Cardiac septum (tissue), 1 donor: ENCODE measurements at regions of chr4 and their contacts with region 1.

Region 1: GRCh38 chr4:152849350-152849749 is 69.6 kb downstream of the ARFIP1 start:
- DNase-seq: no peak

Region 2: DNA sequence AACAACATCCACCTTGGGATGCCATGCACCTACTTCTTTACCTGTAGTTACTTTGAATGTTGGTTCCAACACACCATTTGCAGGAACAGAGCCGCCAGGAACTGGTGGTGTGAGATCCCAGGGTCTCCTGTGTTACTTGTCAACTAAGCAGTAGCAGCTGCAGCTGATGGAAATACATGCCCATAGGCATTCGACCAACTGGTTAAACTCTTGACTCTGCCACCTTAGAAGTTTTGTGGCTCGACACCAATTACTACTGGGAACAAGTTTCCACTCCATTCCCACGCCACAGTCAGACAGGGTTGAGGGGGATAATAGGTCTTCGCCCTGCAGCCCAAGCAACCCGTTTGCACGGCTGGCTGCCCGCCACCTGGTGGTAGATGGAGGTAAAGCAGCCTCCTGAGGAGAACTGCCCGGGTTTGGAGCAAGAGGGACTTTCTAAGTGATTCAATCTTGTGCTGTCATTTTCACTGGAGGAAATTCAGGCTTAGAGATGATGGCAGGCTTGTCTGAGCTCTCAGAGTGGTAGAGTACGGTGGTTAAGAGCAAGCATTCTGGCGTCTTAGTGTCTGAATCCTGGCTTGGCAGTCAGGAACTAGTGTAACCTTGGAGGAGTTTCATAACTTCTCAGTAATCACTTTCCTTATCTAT is 235.8 kb after region 1 on chr4:
- intact Hi-C with region 1: loop called (anchors 2 kb)
- DNase-seq: peak; percentile 85

Region 3: DNA sequence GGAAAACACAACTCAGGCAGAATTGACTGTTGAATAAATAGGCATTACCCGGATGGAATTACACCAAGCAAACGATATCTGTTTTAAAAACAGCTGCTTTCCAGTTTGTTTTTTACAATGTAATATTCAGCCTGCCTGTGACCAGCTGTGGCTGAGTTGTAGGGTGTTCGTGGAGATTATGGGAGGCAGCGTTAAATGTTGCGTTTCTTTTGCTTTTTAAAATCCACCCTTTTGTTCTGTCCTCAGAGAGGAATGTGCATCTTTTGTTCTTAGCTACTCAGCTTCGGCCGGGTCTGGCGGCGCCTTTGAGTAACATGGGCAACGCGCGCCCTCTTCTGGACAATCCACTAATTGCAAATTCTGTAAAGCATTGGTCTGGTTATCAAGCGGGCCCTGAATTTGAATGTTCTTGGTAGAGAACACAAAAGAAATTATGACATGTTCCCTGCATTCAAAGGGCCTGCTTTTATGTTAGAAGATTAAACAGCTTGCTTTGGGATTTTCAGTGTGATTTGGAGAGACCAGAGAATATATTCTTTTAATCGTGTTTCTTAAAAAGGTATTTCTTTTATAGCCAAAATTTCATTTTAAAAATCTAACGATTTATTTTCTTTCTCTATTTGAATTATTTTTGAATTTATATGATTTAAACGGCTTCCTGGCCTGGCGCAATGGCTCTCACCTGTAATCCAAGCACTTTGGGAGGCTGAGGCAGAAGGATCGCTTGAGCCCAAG is 278.6 kb after region 1 on chr4:
- intact Hi-C with region 1: loop called (anchors 5 kb)
- DNase-seq: peak; percentile 92